ENCODE measurements at regions of chr6 and their contacts with region 1.

Region 1: DNA sequence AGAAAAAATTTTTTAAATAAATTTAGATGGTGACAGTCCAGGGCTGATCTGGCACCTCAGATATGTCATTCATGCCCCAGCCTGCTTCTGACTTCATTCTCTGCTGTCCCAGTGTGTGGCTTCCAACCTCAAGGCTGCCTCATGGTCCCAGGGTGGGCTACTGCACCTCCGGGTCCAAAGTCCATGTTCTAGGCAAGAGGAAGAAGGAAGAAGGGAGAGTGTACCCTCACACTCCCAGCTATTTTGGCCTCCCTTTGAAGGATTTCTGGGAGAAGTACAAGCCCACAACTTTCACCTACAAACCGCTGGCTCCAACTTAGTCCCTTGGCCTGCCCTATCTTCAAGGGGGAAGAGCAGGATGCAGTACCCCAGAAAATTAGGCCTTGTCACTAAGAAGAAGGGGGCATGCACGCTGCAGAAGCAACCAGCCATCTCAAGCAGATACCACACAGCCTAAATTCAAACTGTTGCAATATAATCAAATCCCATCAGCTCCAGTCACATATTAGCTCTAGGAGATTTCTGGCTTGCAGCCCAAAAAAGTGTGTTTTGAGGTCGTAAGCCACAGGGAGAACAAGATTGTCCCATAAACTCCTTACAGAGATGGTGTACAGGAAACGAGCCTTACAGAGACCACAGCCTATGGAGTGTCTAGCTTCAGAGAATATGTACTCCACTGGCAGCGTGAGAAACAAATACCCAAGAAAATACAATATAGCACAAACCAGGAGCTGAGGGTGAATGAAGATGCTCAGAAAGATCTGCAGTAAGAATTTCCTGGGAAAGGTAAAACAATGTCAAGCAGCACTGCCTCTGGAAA is 906 bp upstream of the BTN3A2 start:
- DNase-seq: no peak
- ATAC-seq: no peak
- H3K4me3 Mint-ChIP-seq: no peak overlapping the region
- H3K27ac Mint-ChIP-seq: no peak overlapping the region
- H3K4me1 Mint-ChIP-seq: peaks cover 39% of the 10 kb centered on the region
- H3K27me3 Mint-ChIP-seq: peaks cover 7% of the 10 kb centered on the region
- CTCF ChIP-seq: no peak

Region 2: DNA sequence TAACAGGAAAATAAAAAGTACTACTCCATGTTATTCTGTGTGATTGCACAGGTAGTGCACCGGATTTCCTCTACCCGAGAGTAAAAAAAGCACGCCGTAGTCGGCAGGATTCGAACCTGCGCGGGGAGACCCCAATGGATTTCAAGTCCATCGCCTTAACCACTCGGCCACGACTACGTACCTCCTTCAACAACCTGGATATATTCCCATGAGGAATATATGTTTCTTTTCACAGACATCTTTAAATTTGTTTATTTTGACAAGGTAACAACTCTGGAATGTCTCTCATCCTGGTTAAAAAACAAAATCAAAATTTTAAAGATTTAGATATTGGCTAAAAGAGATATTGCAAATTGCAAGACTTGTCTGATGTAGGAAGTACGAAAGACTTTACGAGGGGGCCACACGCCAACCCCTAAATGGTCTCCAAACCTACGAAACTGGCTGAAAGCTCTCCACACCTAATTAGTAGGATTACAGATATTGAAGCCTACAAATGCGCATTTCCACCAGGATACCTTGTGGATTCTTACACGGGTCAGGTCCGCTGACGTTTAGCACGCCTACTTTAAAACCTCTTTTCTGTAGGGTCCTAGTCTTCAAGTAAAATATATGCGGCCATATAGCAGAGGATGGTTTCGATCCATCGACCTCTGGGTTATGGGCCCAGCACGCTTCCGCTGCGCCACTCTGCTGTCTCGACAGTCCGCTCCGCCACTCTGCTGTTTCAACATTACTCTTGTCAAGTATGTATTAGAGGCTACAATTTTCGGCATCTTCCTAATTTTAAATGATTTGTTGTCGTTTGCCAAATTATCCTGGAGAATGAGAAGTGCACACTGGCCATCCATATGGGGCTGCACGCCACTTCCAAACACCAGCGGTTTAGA is 51.3 kb before region 1 on chr6:
- CTCF ChIA-PET with region 1: no interaction called
- POLR2A ChIA-PET with region 1: no interaction called
- intact Hi-C with region 1: loop called (anchors 2 kb)
- DNase-seq: peak; percentile 63
- ATAC-seq: peak; percentile 79
- H3K4me3 Mint-ChIP-seq: peak overlapping the region; percentile 90
- H3K27ac Mint-ChIP-seq: peak overlapping the region; percentile 95
- H3K4me1 Mint-ChIP-seq: peaks cover 28% of the 10 kb centered on the region
- H3K27me3 Mint-ChIP-seq: peaks cover 5% of the 10 kb centered on the region
- CTCF ChIP-seq: no peak

Region 3: DNA sequence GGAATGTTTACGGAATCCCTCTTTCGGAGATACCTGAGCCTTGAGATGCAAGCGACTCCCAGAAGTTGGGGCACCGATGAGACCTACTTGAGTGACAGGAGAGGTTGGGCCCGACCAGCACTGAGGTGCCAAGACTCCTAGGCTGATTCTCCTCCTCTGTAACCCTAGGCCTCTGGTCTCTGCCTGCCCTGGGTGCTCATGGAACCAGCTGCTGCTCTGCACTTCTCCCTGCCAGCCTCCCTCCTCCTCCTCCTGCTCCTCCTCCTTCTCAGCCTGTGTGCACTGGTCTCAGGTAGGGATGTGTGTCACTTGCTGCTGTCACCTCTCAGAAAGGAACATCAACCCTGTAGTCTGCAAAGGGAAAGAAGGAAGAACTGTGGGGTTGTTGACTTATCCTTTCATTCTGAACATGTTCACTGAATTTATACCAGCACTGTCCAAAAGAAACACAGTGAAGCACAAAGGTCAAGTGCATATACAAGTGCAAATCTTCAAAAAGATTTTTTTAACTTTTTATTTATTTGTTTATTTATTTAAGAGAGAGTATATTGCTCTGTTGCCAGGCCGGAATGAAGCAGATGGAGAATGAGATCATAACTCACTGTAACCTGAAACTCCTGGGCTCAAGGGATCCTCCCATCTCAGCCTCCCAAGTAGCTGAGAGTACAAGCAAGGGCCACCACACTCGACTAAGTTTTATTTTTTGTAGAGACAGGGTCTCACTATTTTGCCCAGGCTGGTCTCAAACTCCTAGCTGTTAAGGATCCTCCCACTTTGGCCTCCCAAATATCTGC is 19.7 kb after region 1 on chr6:
- CTCF ChIA-PET with region 1: no interaction called
- POLR2A ChIA-PET with region 1: interaction called, 4 read pairs
- intact Hi-C with region 1: loop called (anchors 2 kb)
- DNase-seq: no peak
- ATAC-seq: peak; percentile 16
- H3K4me3 Mint-ChIP-seq: peak overlapping the region; percentile 97
- H3K27ac Mint-ChIP-seq: peak overlapping the region; percentile 94
- H3K4me1 Mint-ChIP-seq: peaks cover 66% of the 10 kb centered on the region
- H3K27me3 Mint-ChIP-seq: no peaks in the 10 kb centered on the region
- CTCF ChIP-seq: no peak

Region 4: DNA sequence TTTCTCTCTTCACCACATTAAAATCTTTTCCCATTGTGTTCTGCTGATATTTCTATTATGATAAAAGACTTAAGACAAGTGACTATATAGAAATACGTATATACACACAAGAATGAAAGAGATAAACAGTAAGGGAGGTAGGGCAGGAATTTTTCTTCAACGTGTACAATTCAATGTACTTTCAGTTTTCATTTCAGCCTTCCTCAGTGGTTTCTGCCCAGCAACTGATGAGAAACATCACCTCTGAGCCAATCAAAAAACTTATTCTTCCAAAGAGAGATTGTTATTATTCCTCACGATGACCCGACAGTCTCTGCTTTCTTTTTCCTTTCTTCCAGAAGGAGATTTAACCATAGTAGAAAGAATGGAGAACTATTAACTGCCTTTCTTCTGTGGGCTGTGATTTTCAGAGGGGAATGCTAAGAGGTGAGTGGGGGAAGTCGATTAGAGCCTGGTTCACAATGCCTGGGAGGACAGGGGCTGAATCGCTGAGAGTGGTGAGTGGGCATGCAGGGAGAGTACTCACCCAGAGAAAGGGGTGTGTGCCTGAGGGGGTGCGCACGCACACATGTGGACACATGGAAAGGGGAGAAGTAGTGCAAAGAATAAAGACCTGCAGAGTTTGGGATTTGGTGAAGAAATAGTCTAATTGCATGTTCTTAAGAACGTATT is 38.0 kb after region 1 on chr6 and contains the start of gene BTN3A1:
- CTCF ChIA-PET with region 1: no interaction called
- POLR2A ChIA-PET with region 1: no interaction called
- intact Hi-C with region 1: loop called (anchors 2 kb)
- DNase-seq: peak; percentile 43
- ATAC-seq: peak; percentile 87
- H3K4me3 Mint-ChIP-seq: peak within 1 kb of the TSS; percentile 98
- H3K27ac Mint-ChIP-seq: peak within 1 kb of the TSS; percentile 98
- H3K4me1 Mint-ChIP-seq: peaks cover 65% of the 10 kb centered on the region
- H3K27me3 Mint-ChIP-seq: no peaks in the 10 kb centered on the region
- CTCF ChIP-seq: no peak
- total RNA-seq, gene BTN3A1: 55.4 and 61.7 TPM in 2 replicates

Region 5: DNA sequence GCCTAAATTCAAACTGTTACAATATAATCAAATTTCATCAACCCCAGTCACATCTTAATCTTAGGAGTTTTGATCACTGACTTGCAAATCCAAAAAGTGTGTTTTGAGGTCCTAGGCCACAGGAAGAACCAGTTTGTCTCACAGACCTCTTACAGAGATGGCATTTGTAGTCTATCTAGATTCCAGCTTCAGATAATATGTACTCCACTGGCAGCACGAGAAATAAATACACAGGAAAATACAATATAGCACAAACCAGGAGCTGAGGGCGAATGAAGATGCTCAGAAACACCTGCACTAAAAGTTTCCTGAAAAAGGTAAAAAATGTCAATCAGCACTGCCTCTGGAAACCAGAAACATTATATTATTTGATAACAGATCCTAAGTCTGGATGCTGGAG is 75.6 kb after region 1 on chr6:
- CTCF ChIA-PET with region 1: no interaction called
- POLR2A ChIA-PET with region 1: interaction called, 3 read pairs
- intact Hi-C with region 1: loop called (anchors 2 kb)
- DNase-seq: no peak
- ATAC-seq: no peak
- H3K4me3 Mint-ChIP-seq: peak overlapping the region; percentile 92
- H3K27ac Mint-ChIP-seq: peak overlapping the region; percentile 90
- H3K4me1 Mint-ChIP-seq: peaks cover 40% of the 10 kb centered on the region
- H3K27me3 Mint-ChIP-seq: no peaks in the 10 kb centered on the region
- CTCF ChIP-seq: no peak